CD8-positive, alpha-beta memory T cell (primary cell): ENCODE measurements at regions of chr9 and their contacts with region 1.

Region 1: GRCh38 chr9:37119907-37120842 is at the start of gene ZCCHC7:
- DNase-seq: peak; percentile 94 to 98 (median 97)
- H3K4me3 ChIP-seq: peak within 1 kb of the TSS; percentile 85
- H3K4me3 Mint-ChIP-seq: peak within 1 kb of the TSS; percentile 91 to 100 (median 98)
- H3K27ac ChIP-seq: peak within 1 kb of the TSS; percentile 98
- H3K27ac Mint-ChIP-seq: peak within 1 kb of the TSS; percentile 96 to 99 (median 99)
- H3K4me1 ChIP-seq: peaks cover 35% of the 10 kb centered on the region
- H3K4me1 Mint-ChIP-seq: peaks cover 37 to 50% (median 49%) of the 10 kb centered on the region in 3 donors
- H3K27me3 ChIP-seq: no peaks in the 10 kb centered on the region
- H3K27me3 Mint-ChIP-seq: no peaks in the 10 kb centered on the region
- total RNA-seq, gene ZCCHC7: 25.6 to 27.1 TPM

Region 2: GRCh38 chr9:37079370-37080164 is 40.6 kb before region 1 on chr9:
- CTCF ChIA-PET with region 1: interaction called, 10 read pairs
- POLR2A ChIA-PET with region 1: interaction called, 31 read pairs
- DNase-seq: peak; percentile 86 to 97 (median 93)
- H3K4me3 ChIP-seq: peak overlapping the region; percentile 53
- H3K4me3 Mint-ChIP-seq: peak overlapping the region; percentile 94 to 99 (median 97)
- H3K27ac ChIP-seq: peak overlapping the region; percentile 96
- H3K27ac Mint-ChIP-seq: peak overlapping the region; percentile 86 to 98 (median 98)
- H3K4me1 ChIP-seq: peaks cover 36% of the 10 kb centered on the region
- H3K4me1 Mint-ChIP-seq: peaks cover 42 to 56% (median 54%) of the 10 kb centered on the region in 3 donors
- H3K27me3 ChIP-seq: no peaks in the 10 kb centered on the region
- H3K27me3 Mint-ChIP-seq: peaks cover 4 to 12% of the 10 kb centered on the region in 2 donors

Region 3: GRCh38 chr9:37146410-37146809 is 26.2 kb after region 1 on chr9:
- CTCF ChIA-PET with region 1: interaction called, 9 read pairs
- POLR2A ChIA-PET with region 1: interaction called, 13 read pairs
- DNase-seq: peak in 2 of 5 donors; percentile 37 to 57
- H3K4me3 ChIP-seq: peak overlapping the region; percentile 8
- H3K4me3 Mint-ChIP-seq: peak overlapping the region; percentile 24 to 86 (median 70)
- H3K27ac ChIP-seq: peak overlapping the region; percentile 17
- H3K27ac Mint-ChIP-seq: peak overlapping the region; percentile 44 to 94 (median 88)
- H3K4me1 ChIP-seq: peaks cover 41% of the 10 kb centered on the region
- H3K4me1 Mint-ChIP-seq: peaks cover 41 to 65% (median 64%) of the 10 kb centered on the region in 3 donors
- H3K27me3 ChIP-seq: no peaks in the 10 kb centered on the region
- H3K27me3 Mint-ChIP-seq: no peaks in the 10 kb centered on the region

Region 4: DNA sequence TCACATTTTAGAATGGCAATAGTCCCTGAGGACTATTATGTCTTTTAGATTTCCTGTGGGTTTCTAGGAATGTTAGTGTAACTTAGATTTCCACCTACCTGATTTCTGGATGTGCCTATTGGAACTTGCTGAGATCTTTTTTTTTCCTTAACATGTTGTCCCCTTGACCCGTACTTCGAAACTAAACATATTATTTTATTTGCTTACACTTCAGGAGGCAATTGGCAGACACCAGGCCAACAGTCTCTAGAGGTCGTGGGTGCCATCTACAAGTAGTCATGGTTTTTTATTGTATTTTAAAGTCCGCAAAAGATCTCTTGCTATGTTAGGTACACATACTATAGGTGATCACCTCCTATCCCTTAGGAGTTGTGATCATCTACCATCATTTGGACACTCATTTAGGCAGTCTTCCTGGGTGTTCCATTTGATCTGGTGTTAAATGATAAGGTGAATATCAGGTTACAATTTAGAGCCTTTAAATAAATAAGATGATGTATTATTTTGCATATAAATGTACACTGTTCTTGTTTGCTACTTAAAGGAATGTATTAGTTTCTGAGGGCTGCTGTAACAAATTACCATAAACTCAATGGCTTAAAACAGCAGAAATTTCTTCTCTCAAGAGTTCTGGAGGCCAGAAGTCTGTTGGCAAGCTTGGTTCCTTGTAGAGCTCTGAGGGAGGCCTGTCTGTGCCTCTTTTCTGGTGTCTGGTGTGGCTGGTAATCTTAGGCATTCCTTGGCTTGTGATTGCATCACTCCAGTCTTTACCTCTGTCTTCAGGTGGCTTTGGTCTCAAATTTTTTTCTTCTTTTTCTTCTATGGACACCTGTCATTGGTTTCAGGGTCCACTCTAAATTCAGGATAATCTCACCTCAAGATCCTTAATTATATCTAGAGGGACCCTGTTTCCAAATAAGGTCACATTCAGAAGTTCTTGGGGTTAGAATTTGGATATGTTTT is 65.0 kb after region 1 on chr9:
- CTCF ChIA-PET with region 1: no interaction called
- POLR2A ChIA-PET with region 1: no interaction called
- DNase-seq: no peak
- H3K4me3 ChIP-seq: no peak overlapping the region
- H3K4me3 Mint-ChIP-seq: no peak overlapping the region
- H3K27ac ChIP-seq: no peak overlapping the region
- H3K27ac Mint-ChIP-seq: no peak overlapping the region
- H3K4me1 ChIP-seq: peaks cover 12% of the 10 kb centered on the region
- H3K4me1 Mint-ChIP-seq: peaks cover 40 to 53% (median 46%) of the 10 kb centered on the region in 3 donors
- H3K27me3 ChIP-seq: no peaks in the 10 kb centered on the region
- H3K27me3 Mint-ChIP-seq: no peaks in the 10 kb centered on the region